Lower leg skin (tissue), 4 donors: ENCODE measurements at regions of chr3 and their contacts with region 1.

Region 1: GRCh38 chr3:155449613-155450267 is 156.3 kb upstream of the STRIT1 start:
- DNase-seq: no peak
- H3K4me3 ChIP-seq: no peak overlapping the region
- CTCF ChIP-seq: no peak
- POLR2A ChIP-seq: no peak

Region 2: GRCh38 chr3:155431856-155432570 is 17.7 kb before region 1 on chr3:
- intact Hi-C with region 1: loop called (anchors 1 kb)
- DNase-seq: no peak
- H3K4me3 ChIP-seq: no peak overlapping the region
- CTCF ChIP-seq: no peak
- POLR2A ChIP-seq: no peak